ENCODE measurements at regions of chr5 and their contacts with region 1.

Region 1: GRCh38 chr5:97019435-97020117 is 83.7 kb downstream of the LNPEP start:
- DNase-seq: no peak
- ATAC-seq: no peak
- H3K4me3 ChIP-seq: no peak overlapping the region
- H3K4me3 Mint-ChIP-seq: no peak overlapping the region
- H3K27ac ChIP-seq: no peak overlapping the region
- H3K27ac Mint-ChIP-seq: no peak overlapping the region
- H3K4me1 ChIP-seq: peaks cover 4% of the 10 kb centered on the region
- H3K4me1 Mint-ChIP-seq: peaks cover 29% of the 10 kb centered on the region
- H3K27me3 ChIP-seq: no peaks in the 10 kb centered on the region
- H3K27me3 Mint-ChIP-seq: no peaks in the 10 kb centered on the region
- CTCF ChIP-seq: no peak

Region 2: GRCh38 chr5:96763026-96763425 is 256.6 kb before region 1 on chr5:
- CTCF ChIA-PET with region 1: no interaction called
- POLR2A ChIA-PET with region 1: interaction called, 5 read pairs
- intact Hi-C with region 1: loop called in 1 of 2 experiments (anchors 10 kb)
- DNase-seq: no peak
- ATAC-seq: no peak
- H3K4me3 ChIP-seq: no peak overlapping the region
- H3K4me3 Mint-ChIP-seq: no peak overlapping the region
- H3K27ac ChIP-seq: no peak overlapping the region
- H3K27ac Mint-ChIP-seq: peak overlapping the region; percentile 2
- H3K4me1 ChIP-seq: no peaks in the 10 kb centered on the region
- H3K4me1 Mint-ChIP-seq: peaks cover 3% of the 10 kb centered on the region
- H3K27me3 ChIP-seq: no peaks in the 10 kb centered on the region
- H3K27me3 Mint-ChIP-seq: no peaks in the 10 kb centered on the region
- CTCF ChIP-seq: no peak

Region 3: GRCh38 chr5:98880151-98880550 is 1860.6 kb after region 1 on chr5:
- CTCF ChIA-PET with region 1: no interaction called
- POLR2A ChIA-PET with region 1: no interaction called
- intact Hi-C with region 1: loop called in 1 of 2 experiments (anchors 10 kb)
- DNase-seq: no peak
- ATAC-seq: no peak
- H3K4me3 ChIP-seq: no peak overlapping the region
- H3K4me3 Mint-ChIP-seq: no peak overlapping the region
- H3K27ac ChIP-seq: no peak overlapping the region
- H3K27ac Mint-ChIP-seq: no peak overlapping the region
- H3K4me1 ChIP-seq: no peaks in the 10 kb centered on the region
- H3K4me1 Mint-ChIP-seq: peaks cover 26% of the 10 kb centered on the region
- H3K27me3 ChIP-seq: no peaks in the 10 kb centered on the region
- H3K27me3 Mint-ChIP-seq: no peaks in the 10 kb centered on the region
- CTCF ChIP-seq: no peak